Activated B cell treated with CpG ODN at 0.5 μM for 24 hours (primary cell): ENCODE measurements at regions of chr12 and their contacts with region 1.

Region 1: DNA sequence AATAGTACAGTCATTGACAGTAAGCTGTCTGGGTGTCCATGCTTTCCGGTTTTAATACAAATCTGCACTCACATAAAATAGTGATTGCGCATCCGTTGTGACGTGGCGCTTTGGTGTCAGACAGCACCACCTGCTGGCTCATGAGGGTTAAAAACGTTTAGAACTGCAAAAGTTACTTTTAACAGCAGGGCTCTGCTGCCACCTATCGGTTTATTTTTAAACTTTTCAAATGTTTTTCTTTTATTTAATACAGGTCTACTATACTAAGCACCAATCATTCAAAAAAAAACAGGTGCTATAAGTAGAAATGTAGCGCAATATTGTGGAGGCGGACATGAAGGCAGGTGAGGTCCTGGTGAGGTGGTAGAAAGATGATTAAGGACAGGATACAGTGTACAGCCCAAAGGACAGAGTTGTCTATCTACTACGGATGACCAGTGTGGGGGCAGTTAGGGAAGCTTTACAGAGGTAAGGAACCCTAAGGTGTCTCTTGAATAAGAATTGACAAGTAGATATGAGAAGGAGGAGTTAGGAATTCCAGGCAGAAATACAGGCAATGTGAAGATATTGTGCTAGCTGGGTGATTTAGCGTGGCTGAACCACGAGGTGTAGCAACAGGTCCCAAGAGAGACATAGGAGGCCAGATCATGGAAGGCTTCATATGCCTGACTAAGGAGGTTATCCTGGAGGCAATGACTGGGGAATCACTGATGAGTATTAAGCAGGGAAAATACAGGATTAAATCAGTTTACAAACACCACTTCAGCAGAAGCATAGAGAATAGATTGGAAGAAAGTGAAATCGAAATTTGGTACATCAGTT is 91.5 kb upstream of the PRB2 start:
- DNase-seq: peak; percentile 41
- ATAC-seq: peak; percentile 96
- H3K4me3 Mint-ChIP-seq: no peak overlapping the region
- H3K27ac Mint-ChIP-seq: no peak overlapping the region
- H3K4me1 Mint-ChIP-seq: peaks cover 4% of the 10 kb centered on the region
- H3K27me3 Mint-ChIP-seq: peaks cover 21% of the 10 kb centered on the region
- CTCF ChIP-seq: peak; percentile 94

Region 2: GRCh38 chr12:9813821-9814809 is 1672.7 kb before region 1 on chr12:
- CTCF ChIA-PET with region 1: no interaction called
- POLR2A ChIA-PET with region 1: no interaction called
- intact Hi-C with region 1: loop called (anchors 10 kb)
- DNase-seq: peak; percentile 80
- ATAC-seq: peak; percentile 97
- H3K4me3 Mint-ChIP-seq: peak overlapping the region; percentile 73
- H3K27ac Mint-ChIP-seq: no peak overlapping the region
- H3K4me1 Mint-ChIP-seq: peaks cover 20% of the 10 kb centered on the region
- H3K27me3 Mint-ChIP-seq: peaks cover 18% of the 10 kb centered on the region
- CTCF ChIP-seq: peak; percentile 47

Region 3: GRCh38 chr12:10331642-10332239 is 1155.1 kb before region 1 on chr12:
- CTCF ChIA-PET with region 1: no interaction called
- POLR2A ChIA-PET with region 1: no interaction called
- intact Hi-C with region 1: loop called (anchors 5 kb)
- DNase-seq: no peak
- ATAC-seq: peak; percentile 47
- H3K4me3 Mint-ChIP-seq: no peak overlapping the region
- H3K27ac Mint-ChIP-seq: no peak overlapping the region
- H3K4me1 Mint-ChIP-seq: no peaks in the 10 kb centered on the region
- H3K27me3 Mint-ChIP-seq: peaks cover 5% of the 10 kb centered on the region
- CTCF ChIP-seq: peak; percentile 24

Region 4: DNA sequence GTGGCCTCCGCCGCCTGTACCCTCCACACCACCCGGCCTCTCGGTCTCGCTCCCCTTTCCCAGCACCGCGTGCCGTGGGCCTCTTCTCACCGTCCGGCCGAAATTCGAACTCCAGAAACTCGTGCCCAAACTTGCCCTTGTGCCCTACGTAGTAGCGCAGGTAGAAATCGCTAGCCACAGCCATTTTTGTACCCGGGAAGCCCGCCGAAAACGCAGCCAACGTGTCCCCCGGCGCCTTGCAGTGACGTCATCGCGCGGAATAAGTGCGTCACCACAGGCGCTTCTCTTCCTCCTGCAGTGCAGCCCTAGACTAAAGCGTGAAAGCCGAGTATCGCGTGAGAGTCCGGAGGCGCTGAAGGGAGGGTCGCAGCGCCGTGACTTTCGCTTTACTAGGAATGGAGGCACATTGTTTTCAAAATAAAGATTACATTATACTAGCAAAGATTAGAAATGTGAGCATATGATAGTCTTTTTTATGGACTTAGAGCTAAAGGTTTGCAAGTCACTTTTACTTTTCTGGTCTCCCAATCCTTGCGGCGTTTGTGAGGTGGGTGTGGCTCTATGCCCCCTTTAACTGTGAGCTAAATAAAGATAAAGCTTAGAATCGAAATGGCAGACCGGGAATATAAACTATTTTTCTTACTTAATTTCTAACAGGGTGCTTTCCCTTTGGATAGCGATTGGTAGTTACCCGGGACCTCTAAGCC is 873.3 kb before region 1 on chr12 and contains the start of gene MAGOHB:
- CTCF ChIA-PET with region 1: no interaction called
- POLR2A ChIA-PET with region 1: no interaction called
- intact Hi-C with region 1: loop called (anchors 5 kb)
- DNase-seq: peak; percentile 99
- ATAC-seq: peak; percentile 96
- H3K4me3 Mint-ChIP-seq: peak within 1 kb of the TSS; percentile 100
- H3K27ac Mint-ChIP-seq: peak within 1 kb of the TSS; percentile 100
- H3K4me1 Mint-ChIP-seq: peaks cover 29% of the 10 kb centered on the region
- H3K27me3 Mint-ChIP-seq: peaks cover 6% of the 10 kb centered on the region
- CTCF ChIP-seq: no peak
- total RNA-seq, gene MAGOHB: 25.0 and 28.8 TPM in 2 replicates

Region 5: GRCh38 chr12:10959804-10960203 is 527.0 kb before region 1 on chr12:
- CTCF ChIA-PET with region 1: no interaction called
- POLR2A ChIA-PET with region 1: no interaction called
- intact Hi-C with region 1: loop called (anchors 5 kb)
- DNase-seq: no peak
- ATAC-seq: no peak
- H3K4me3 Mint-ChIP-seq: no peak overlapping the region
- H3K27ac Mint-ChIP-seq: no peak overlapping the region
- H3K4me1 Mint-ChIP-seq: peaks cover 12% of the 10 kb centered on the region
- H3K27me3 Mint-ChIP-seq: no peaks in the 10 kb centered on the region
- CTCF ChIP-seq: no peak

Region 6: DNA sequence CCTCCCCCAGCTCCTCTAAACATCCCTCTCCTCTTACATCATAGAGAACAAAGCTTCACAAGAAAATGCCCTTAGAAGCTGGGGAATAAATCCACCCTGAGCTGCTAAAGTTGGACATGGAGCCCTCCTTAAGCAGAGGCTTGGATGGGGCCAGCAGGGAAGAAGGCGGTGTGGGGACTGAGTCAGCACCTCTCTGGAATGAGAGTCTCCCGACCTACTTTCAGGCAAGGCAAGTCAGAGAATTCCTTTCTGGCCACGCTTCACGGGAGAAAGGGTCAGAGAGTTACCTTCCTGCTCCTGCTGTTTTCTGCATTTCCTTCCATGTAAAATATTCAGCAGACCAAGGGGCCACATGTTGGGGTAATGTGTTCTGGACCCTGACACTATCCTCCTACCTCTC is 21.9 kb after region 1 on chr12:
- CTCF ChIA-PET with region 1: no interaction called
- POLR2A ChIA-PET with region 1: no interaction called
- intact Hi-C with region 1: no loop called
- DNase-seq: no peak
- ATAC-seq: no peak
- H3K4me3 Mint-ChIP-seq: no peak overlapping the region
- H3K27ac Mint-ChIP-seq: no peak overlapping the region
- H3K4me1 Mint-ChIP-seq: no peaks in the 10 kb centered on the region
- H3K27me3 Mint-ChIP-seq: peaks cover 12% of the 10 kb centered on the region
- CTCF ChIP-seq: no peak

Region 7: DNA sequence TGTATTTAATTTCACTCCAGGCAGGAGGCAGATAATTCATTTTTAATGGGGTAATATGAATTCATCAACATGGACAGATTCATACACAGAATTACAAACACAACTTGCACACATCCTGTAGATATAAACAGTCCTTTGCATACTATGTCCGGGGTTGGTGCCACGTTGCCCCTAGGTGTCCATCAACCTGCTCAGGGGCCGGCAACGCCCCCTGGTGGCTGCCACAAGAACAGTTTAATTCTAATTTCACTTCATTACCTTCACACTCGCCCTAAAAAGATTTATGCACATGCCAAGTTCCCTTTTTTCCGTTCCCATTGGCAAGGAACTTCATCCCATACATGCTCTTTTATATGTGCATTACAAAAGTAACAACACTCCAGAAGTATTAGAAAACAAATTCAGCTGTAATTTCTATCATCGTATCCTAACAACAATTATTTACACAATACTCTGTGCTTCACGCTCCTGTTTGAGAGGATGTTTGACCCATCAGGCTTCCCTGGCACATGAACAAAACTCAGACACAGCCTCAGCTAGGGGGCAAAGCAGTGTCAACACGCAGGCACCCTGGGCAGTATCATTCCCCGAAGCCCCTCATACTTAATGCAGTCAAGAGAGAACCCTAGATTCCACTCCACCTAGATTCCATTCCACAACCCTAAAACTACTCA is 847.7 kb after region 1 on chr12:
- CTCF ChIA-PET with region 1: no interaction called
- POLR2A ChIA-PET with region 1: no interaction called
- intact Hi-C with region 1: loop called (anchors 5 kb)
- DNase-seq: peak; percentile 41
- ATAC-seq: peak; percentile 72
- H3K4me3 Mint-ChIP-seq: no peak overlapping the region
- H3K27ac Mint-ChIP-seq: no peak overlapping the region
- H3K4me1 Mint-ChIP-seq: peaks cover 9% of the 10 kb centered on the region
- H3K27me3 Mint-ChIP-seq: peaks cover 2% of the 10 kb centered on the region
- CTCF ChIP-seq: peak; percentile 58